CD4-positive, alpha-beta T cell (primary cell): ENCODE measurements at regions of chr10 and their contacts with region 1.

Region 1: DNA sequence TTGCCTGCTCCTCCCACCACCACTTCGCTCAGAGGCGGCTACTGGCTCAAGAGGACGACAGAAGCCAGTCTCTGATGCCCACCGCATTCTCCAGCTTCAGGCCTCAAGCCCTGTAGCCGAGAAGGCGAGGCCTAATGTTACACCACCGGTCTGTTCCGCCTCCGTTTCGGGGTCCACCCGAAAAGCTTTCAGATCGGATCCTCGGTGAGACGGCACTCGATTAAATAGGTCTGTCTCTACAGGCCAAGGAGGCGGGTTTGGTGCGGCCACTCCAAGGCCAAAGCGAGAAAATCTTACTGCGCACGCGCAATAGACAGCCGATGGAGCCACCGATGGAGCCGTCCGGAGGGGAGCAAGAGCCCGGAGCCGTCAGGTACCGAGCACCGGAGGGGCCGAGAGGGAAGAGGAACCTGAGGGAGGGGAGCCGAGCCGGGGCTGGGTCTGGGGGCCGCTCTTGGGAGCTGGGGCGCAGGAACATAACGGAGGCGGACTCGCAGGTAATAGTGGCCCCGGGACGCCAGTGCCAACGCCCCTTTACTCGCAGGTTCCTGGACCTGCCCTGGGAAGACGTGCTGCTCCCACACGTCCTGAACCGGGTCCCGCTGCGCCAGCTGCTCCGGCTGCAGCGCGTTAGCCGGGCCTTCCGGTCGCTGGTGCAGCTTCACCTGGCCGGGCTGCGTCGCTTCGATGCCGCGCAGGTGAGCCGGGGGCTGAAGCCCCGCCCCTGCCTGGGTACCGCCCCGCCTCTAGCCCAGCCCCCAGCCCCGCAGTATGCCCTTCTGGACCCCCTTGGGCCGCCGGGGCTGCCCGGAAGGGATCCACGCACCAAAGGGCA is at the start of gene FBXL15:
- DNase-seq: peak; percentile 85 to 97 (median 94)
- ATAC-seq: peak; percentile 76
- H3K4me3 ChIP-seq: peak within 1 kb of the TSS; percentile 83
- H3K4me3 Mint-ChIP-seq: peak within 1 kb of the TSS; percentile 99
- H3K27ac ChIP-seq: peak within 1 kb of the TSS; percentile 65 to 82
- H3K27ac Mint-ChIP-seq: peak within 1 kb of the TSS; percentile 97
- H3K4me1 ChIP-seq: peaks cover 47% of the 10 kb centered on the region
- H3K4me1 Mint-ChIP-seq: peaks cover 34% of the 10 kb centered on the region
- H3K27me3 ChIP-seq: peaks cover 16 to 22% of the 10 kb centered on the region in 2 experiments
- H3K27me3 Mint-ChIP-seq: peaks cover 24% of the 10 kb centered on the region
- CTCF ChIP-seq: no peak
- total RNA-seq, gene FBXL15: 10.2 to 10.4 TPM

Region 2: DNA sequence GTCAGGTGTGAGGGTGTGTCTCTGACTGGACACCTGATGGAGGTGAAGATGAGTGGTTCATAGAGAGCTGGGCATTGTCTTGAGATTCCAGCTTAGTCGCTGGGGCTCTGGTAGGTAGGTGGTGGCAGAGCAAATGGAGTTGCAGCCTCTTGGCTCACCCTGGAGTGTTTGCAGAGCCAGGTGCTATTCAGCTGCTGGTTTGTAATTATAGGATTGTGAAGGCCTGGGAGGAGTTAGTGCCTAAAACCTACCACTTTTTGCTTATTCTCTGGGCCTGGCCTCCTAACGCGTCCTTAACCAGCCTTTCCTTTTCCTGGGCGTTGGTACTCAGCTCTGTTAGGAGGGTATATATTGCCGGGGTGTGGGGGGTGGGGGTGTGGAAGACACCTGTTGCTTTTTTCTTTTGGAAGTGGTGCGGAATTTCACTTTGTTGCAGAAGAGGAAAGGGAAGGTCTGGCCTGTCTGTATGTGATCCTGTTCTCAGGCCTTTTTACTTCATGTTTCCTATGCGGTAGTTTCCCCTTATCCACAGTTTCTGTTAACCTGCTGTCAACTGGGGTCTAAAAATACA is 285.0 kb before region 1 on chr10:
- CTCF ChIA-PET with region 1: no interaction called
- POLR2A ChIA-PET with region 1: no interaction called
- intact Hi-C with region 1: no loop called
- DNase-seq: no peak
- ATAC-seq: no peak
- H3K4me3 ChIP-seq: no peak overlapping the region
- H3K4me3 Mint-ChIP-seq: peak overlapping the region; percentile 65
- H3K27ac ChIP-seq: no peak overlapping the region
- H3K27ac Mint-ChIP-seq: peak overlapping the region; percentile 27
- H3K4me1 ChIP-seq: peaks cover 40% of the 10 kb centered on the region
- H3K4me1 Mint-ChIP-seq: peaks cover 39% of the 10 kb centered on the region
- H3K27me3 ChIP-seq: no peaks in the 10 kb centered on the region
- H3K27me3 Mint-ChIP-seq: no peaks in the 10 kb centered on the region
- CTCF ChIP-seq: no peak

Region 3: DNA sequence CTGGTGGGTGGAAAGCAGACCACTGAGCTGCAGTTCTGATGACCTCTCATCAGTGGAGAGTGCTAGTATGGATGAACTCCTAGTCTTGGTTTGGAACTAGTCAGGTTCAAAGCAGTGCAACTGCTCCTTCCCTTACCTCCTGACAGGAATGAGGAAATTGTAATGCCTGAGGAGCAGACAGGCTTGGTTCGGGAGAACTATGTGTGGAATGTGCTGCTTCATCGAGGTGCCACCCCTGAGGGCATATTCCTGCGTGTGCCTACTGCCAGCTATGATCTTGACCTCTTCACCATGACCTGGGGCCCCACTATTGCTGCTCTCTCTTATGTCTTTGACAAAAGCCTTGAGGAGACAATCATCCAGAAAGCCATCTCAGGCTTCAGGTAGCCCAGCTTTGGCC is 53.0 kb before region 1 on chr10:
- CTCF ChIA-PET with region 1: no interaction called
- POLR2A ChIA-PET with region 1: no interaction called
- intact Hi-C with region 1: loop called in 1 of 2 experiments (anchors 5 kb)
- DNase-seq: no peak
- ATAC-seq: no peak
- H3K4me3 ChIP-seq: no peak overlapping the region
- H3K4me3 Mint-ChIP-seq: no peak overlapping the region
- H3K27ac ChIP-seq: no peak overlapping the region
- H3K27ac Mint-ChIP-seq: no peak overlapping the region
- H3K4me1 ChIP-seq: no peaks in the 10 kb centered on the region
- H3K4me1 Mint-ChIP-seq: no peaks in the 10 kb centered on the region
- H3K27me3 ChIP-seq: no peaks in the 10 kb centered on the region
- H3K27me3 Mint-ChIP-seq: no peaks in the 10 kb centered on the region
- CTCF ChIP-seq: no peak

Region 4: DNA sequence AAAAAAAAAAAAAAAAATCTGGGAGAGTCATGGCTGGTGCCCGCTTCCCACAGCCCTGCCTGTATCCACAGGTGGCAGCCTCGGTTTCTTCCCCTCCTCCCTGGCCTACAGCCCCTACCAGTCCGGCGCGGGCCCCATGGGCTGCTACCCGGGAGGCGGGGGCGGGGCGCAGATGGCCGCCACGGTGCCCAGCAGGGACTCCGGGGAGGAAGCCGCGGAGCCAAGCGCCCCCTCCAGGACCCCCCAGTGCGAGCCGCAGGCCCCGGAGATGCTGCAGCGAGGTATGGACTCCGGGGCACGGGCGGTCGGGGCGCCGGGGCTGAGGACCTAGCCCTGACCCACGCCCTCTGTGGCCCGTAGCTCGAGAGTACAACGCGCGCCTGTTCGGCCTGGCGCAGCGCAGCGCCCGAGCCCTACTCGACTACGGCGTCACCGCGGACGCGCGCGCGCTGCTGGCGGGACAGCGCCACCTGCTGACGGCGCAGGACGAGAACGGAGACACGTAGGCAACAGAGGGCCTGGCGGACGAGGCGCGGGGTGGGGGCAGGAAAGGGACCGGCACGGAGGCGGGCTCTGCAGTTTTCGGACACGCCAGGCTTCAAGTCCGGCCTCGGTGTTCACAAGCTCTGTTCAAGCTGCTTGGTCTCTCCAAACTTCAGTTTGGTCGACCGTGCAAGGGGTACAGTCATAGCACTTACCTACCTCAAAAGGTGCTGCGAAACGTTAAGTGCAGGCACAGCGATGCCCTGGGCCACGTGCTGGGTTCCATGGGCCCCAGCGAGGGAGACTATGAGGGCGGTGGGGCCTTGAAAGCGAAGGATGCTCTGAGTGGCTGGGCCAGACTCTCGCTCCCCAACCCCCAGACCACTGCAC is 21.6 kb before region 1 on chr10:
- CTCF ChIA-PET with region 1: interaction called, 26 read pairs
- POLR2A ChIA-PET with region 1: interaction called, 71 read pairs
- intact Hi-C with region 1: loop called (anchors 2 kb)
- DNase-seq: peak; percentile 80 to 96 (median 86)
- ATAC-seq: peak; percentile 52
- H3K4me3 ChIP-seq: peak overlapping the region; percentile 43
- H3K4me3 Mint-ChIP-seq: peak overlapping the region; percentile 92
- H3K27ac ChIP-seq: peak overlapping the region; percentile 64 to 88
- H3K27ac Mint-ChIP-seq: peak overlapping the region; percentile 100
- H3K4me1 ChIP-seq: peaks cover 64% of the 10 kb centered on the region
- H3K4me1 Mint-ChIP-seq: peaks cover 44% of the 10 kb centered on the region
- H3K27me3 ChIP-seq: no peaks in the 10 kb centered on the region
- H3K27me3 Mint-ChIP-seq: no peaks in the 10 kb centered on the region
- CTCF ChIP-seq: peak; percentile 99

Region 5: GRCh38 chr10:102432162-102432950 is 11.3 kb after region 1 on chr10 and contains the start of gene CUEDC2:
- CTCF ChIA-PET with region 1: interaction called, 4 read pairs
- POLR2A ChIA-PET with region 1: interaction called, 92 read pairs
- intact Hi-C with region 1: loop called (anchors 1 kb)
- DNase-seq: peak; percentile 90 to 97 (median 96)
- ATAC-seq: peak; percentile 93
- H3K4me3 ChIP-seq: peak within 1 kb of the TSS; percentile 72
- H3K4me3 Mint-ChIP-seq: peak within 1 kb of the TSS; percentile 95
- H3K27ac ChIP-seq: peak within 1 kb of the TSS; percentile 23 to 37
- H3K27ac Mint-ChIP-seq: peak within 1 kb of the TSS; percentile 92
- H3K4me1 ChIP-seq: peaks cover 57% of the 10 kb centered on the region
- H3K4me1 Mint-ChIP-seq: peaks cover 56% of the 10 kb centered on the region
- H3K27me3 ChIP-seq: no peaks in the 10 kb centered on the region
- H3K27me3 Mint-ChIP-seq: no peaks in the 10 kb centered on the region
- CTCF ChIP-seq: no peak
- total RNA-seq, gene CUEDC2: 25.5 to 25.6 TPM

Region 6: GRCh38 chr10:102461187-102462054 is 40.4 kb after region 1 on chr10:
- CTCF ChIA-PET with region 1: interaction called, 12 read pairs
- POLR2A ChIA-PET with region 1: interaction called, 10 read pairs
- intact Hi-C with region 1: loop called in 1 of 2 experiments (anchors 2 kb)
- DNase-seq: peak; percentile 87 to 97 (median 93)
- ATAC-seq: peak; percentile 100
- H3K4me3 ChIP-seq: peak overlapping the region; percentile 72
- H3K4me3 Mint-ChIP-seq: peak overlapping the region; percentile 92
- H3K27ac ChIP-seq: peak overlapping the region in 1 of 2 donors; percentile 38
- H3K27ac Mint-ChIP-seq: peak overlapping the region; percentile 70
- H3K4me1 ChIP-seq: peaks cover 28% of the 10 kb centered on the region
- H3K4me1 Mint-ChIP-seq: peaks cover 29% of the 10 kb centered on the region
- H3K27me3 ChIP-seq: no peaks in the 10 kb centered on the region
- H3K27me3 Mint-ChIP-seq: no peaks in the 10 kb centered on the region
- CTCF ChIP-seq: no peak

Region 7: GRCh38 chr10:102480396-102480795 is 59.4 kb after region 1 on chr10:
- CTCF ChIA-PET with region 1: interaction called, 21 read pairs
- POLR2A ChIA-PET with region 1: no interaction called
- intact Hi-C with region 1: no loop called
- DNase-seq: no peak
- ATAC-seq: no peak
- H3K4me3 ChIP-seq: no peak overlapping the region
- H3K4me3 Mint-ChIP-seq: peak overlapping the region; percentile 15
- H3K27ac ChIP-seq: no peak overlapping the region
- H3K27ac Mint-ChIP-seq: no peak overlapping the region
- H3K4me1 ChIP-seq: peaks cover 16% of the 10 kb centered on the region
- H3K4me1 Mint-ChIP-seq: peaks cover 17% of the 10 kb centered on the region
- H3K27me3 ChIP-seq: no peaks in the 10 kb centered on the region
- H3K27me3 Mint-ChIP-seq: no peaks in the 10 kb centered on the region
- CTCF ChIP-seq: no peak